AG04450 (cell line): ENCODE measurements at regions of chr11 and their contacts with region 1.

Region 1: DNA sequence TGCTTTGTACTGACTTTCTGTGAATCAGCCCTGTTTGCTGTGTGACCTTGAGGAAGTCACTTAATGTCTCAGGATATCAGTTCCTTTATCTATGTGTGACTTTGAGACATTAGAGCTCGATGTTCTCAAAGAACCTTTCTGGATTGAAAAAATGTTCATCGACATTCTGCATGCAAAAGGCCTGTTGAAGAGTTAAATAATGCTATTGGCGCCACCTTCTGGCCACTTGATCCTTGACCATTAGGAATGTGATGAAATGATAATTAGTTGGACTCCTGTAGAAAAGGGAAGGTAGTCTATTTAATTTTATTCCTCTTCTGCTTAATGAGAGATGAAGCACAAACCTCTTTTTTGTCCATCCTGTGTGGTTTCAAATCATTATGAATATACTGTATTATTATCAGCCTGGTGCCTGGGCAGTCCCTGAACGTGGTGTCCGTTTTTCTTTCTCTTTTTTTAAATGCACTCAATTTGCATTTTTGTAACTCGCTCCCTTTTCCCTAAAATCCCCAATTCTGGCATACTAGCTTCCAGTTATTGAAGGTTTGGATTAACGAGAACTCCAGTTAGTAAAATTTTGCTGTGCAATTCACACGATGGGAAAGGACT is 20.7 kb downstream of the ELF5 start:
- DNase-seq: no peak
- H3K4me3 ChIP-seq: no peak overlapping the region
- H3K27ac ChIP-seq: no peak overlapping the region
- H3K27me3 ChIP-seq: peaks cover 33% of the 10 kb centered on the region
- CTCF ChIP-seq: peak; percentile 54

Region 2: DNA sequence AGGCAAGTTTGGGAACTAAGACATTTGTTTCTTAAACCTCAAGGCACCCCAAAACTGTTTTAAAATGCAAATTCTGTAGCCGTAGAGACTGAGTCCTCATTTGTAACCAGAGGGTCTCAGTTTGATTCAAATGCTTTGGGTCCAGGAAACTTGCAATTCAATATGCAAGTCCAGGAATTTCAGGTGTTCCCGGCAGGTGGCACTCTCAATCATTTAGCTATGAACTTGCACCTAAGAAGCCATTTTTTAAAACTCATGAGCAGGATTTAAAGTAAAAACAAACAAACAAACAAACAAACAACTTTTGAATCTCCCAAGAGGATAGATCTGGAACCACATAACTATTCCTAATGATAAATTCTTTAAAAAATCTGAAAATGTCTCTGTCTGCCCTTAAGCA is 126.4 kb before region 1 on chr11:
- CTCF ChIA-PET with region 1: interaction called, 14 read pairs
- POLR2A ChIA-PET with region 1: no interaction called
- DNase-seq: no peak
- H3K4me3 ChIP-seq: no peak overlapping the region
- H3K27ac ChIP-seq: no peak overlapping the region
- H3K27me3 ChIP-seq: peaks cover 6% of the 10 kb centered on the region
- CTCF ChIP-seq: no peak

Region 3: GRCh38 chr11:34458525-34458924 is 34.4 kb before region 1 on chr11:
- CTCF ChIA-PET with region 1: interaction called, 10 read pairs
- POLR2A ChIA-PET with region 1: no interaction called
- DNase-seq: no peak
- H3K4me3 ChIP-seq: no peak overlapping the region
- H3K27ac ChIP-seq: no peak overlapping the region
- H3K27me3 ChIP-seq: no peaks in the 10 kb centered on the region
- CTCF ChIP-seq: no peak

Region 4: GRCh38 chr11:34481307-34481706 is 11.6 kb before region 1 on chr11:
- CTCF ChIA-PET with region 1: interaction called, 11 read pairs
- POLR2A ChIA-PET with region 1: no interaction called
- DNase-seq: no peak
- H3K4me3 ChIP-seq: no peak overlapping the region
- H3K27ac ChIP-seq: no peak overlapping the region
- H3K27me3 ChIP-seq: peaks cover 9% of the 10 kb centered on the region
- CTCF ChIP-seq: no peak

Region 5: DNA sequence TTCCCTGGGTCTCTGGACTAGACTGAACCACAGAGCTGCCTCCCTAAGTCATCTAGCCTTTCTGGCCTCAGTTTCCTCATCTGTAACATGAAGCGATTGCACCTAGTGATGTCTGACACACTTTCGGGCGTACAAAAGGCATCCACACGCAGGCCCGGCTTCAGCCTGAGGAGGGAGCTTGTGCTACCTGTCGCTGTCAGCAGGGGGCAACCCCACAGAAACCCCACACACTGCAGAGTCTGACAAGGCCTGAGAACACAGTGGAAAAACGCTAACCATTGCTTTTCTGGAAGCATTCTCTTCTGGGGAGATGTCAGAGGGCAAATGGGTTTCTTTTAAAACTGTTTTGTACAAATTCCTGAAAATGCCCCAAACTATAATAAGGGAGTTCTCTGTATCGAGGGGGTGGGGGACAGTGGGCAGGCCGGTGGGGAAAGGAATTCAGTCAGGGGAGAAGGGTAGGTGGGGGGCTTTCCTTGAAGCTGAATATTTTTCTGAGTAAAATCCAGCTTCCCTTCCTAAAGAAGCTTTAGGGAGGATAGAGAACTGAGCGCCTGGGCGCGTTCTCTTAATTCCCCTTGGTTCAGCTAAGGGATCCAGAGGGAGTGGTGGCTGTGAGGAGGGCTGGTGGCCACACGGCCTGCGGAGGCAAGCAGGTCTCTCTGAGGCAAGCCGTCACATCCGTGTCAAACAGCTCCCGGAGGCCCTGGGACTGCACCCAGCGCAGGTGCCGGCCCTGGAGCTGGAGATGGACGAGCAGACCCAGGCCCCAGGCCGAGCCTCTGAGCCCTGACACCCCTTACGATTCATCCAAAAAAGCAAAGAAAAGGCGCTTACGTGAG is 20.2 kb after region 1 on chr11:
- CTCF ChIA-PET with region 1: interaction called, 13 read pairs
- POLR2A ChIA-PET with region 1: no interaction called
- DNase-seq: no peak
- H3K4me3 ChIP-seq: no peak overlapping the region
- H3K27ac ChIP-seq: no peak overlapping the region
- H3K27me3 ChIP-seq: no peaks in the 10 kb centered on the region
- CTCF ChIP-seq: peak; percentile 89

Region 6: DNA sequence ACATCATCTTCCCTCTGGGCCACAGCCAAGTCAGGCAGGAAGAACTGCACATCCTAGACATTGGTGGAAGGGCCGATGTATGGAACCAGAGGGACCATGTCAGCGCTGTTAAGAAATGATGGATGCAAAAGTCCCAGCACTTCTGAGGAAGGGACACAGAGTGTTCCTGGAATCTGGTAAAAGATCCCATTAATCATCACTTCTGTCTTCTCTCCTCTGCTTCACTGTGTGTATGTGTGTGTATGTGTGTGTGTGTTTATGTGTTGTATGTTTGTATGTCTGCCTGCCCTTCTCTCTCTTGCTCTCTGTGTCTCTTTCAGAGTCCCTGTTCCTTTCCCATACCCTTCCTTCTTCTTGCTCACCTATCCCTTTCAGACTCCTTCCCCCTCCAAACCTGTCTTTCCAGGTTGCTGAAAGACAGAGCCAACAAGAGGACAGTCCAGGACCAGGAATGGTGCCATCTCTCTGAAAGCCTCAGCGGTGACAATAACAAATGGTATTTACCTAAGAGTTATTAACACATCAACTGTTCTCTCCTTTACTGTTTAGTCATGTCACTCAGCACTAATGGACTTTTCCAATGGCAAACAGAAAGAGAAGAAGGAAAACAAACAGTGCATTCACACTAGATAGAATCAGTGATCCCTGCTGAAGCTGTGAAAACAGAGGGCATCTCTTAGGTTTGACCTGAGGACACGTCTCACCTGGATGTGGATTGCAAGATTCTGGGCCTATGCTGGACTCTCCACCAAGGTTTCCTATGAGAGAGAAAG is 175.1 kb after region 1 on chr11:
- CTCF ChIA-PET with region 1: no interaction called
- POLR2A ChIA-PET with region 1: no interaction called
- DNase-seq: no peak
- H3K4me3 ChIP-seq: no peak overlapping the region
- H3K27ac ChIP-seq: no peak overlapping the region
- H3K27me3 ChIP-seq: no peaks in the 10 kb centered on the region
- CTCF ChIP-seq: no peak